ENCODE measurements at regions of chr17 and their contacts with region 1.

Region 1: GRCh38 chr17:6145946-6146345 is 75.8 kb downstream of the WSCD1 start:
- DNase-seq: no peak
- H3K4me3 ChIP-seq: no peak overlapping the region
- H3K27ac ChIP-seq: no peak overlapping the region
- H3K4me1 ChIP-seq: no peaks in the 10 kb centered on the region
- H3K27me3 ChIP-seq: no peaks in the 10 kb centered on the region
- CTCF ChIP-seq: no peak
- POLR2A ChIP-seq: no peak

Region 2: DNA sequence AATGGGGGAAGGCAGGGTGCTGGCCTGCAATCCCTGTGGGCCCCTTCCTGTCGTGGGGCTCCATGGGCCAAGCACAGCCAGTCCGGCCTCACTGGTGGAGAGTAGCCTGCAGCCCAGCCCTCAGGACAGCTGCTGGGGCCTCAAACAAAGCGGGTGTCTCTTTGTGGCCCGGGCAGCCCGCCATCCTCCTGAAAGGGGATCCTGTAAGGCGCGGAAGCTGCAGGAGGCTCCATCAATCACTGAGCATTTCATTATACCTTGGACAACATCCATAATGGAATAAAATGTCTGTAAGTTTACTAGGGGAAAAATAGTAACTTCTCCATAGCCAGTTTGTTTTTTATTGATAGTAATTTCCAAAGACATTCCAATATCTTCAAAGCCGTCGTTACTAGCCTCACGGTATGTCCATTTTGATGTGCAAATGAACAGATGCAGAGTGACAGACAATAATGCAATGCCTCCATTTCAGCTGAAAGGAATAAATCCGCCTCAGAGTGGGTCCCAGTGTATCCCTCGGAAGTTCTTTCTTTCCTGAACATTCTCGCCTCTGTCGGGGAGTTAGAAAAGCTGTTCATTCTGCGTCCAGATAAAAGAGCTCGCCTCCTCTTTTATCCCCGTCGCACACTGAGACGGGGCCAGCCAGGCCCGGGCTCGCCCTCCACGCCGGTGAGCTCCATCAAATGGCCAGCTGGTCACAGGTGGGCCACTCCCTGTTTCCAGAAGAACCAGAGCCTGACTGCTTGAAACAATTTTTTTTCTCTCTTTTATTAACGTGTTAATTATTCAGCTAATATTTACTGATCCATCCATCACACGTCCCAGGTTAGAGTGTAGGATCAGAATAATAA is 61.4 kb before region 1 on chr17:
- intact Hi-C with region 1: loop called (anchors 10 kb)
- DNase-seq: no peak
- H3K4me3 ChIP-seq: no peak overlapping the region
- H3K27ac ChIP-seq: no peak overlapping the region
- H3K4me1 ChIP-seq: no peaks in the 10 kb centered on the region
- H3K27me3 ChIP-seq: no peaks in the 10 kb centered on the region
- CTCF ChIP-seq: no peak
- POLR2A ChIP-seq: no peak